Activated T-helper 2 cell treated with anti-CD3 and anti-CD28 coated beads, Interferon-gamma antibody, Interleukin-2, Interleukin-4, amounts not matched to agents 10 μg/mL and 5 μg/mL and 100 μg/mL, durations not matched to agents 14 hours and 24 hours and 36 hours (primary cell): ENCODE measurements at regions of chrX and their contacts with region 1.

Region 1: DNA sequence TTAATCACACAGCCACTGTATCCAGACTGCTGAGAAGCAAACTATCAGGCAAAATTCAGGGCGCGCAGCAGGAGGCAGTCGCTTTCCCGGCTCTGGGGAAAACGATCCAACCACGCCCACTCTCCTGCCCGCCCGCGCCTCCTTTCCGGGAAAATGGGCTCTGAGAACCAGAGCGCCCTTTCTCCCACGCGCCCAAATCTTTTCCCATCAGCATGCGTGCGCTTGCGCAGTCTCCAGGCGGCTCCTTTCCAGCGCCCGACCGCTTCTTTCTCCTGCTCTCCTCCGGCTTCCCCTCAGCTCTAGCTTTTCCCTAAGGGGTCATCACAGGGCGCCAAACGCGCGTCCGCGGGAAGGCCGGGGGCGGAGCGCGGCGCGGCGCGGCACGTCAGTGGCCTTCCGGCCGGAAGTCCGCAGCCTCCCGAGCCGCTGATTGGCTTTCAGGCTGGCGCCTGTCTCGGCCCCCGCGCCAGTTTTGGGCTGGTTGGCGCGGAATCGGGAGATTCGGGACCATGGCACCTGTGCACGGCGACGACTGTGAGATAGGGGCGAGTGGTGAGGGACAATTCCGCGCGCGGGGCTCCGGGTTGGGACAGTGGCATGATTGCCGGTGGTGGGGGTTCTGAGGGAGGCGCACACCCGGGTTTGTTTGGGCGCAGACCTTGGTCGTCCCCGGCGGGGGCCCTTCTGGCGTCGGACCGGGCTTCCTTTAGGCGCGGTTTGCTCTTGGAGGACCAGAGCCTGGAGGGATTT is at the start of gene POLA1:
- DNase-seq: peak; percentile 72
- H3K4me3 Mint-ChIP-seq: peak within 1 kb of the TSS; percentile 89
- H3K27ac Mint-ChIP-seq: peak within 1 kb of the TSS; percentile 90
- H3K4me1 Mint-ChIP-seq: peaks cover 11% of the 10 kb centered on the region
- H3K27me3 Mint-ChIP-seq: peaks cover 1% of the 10 kb centered on the region
- total RNA-seq, gene POLA1: 36.3 and 36.7 TPM in 2 replicates

Region 2: DNA sequence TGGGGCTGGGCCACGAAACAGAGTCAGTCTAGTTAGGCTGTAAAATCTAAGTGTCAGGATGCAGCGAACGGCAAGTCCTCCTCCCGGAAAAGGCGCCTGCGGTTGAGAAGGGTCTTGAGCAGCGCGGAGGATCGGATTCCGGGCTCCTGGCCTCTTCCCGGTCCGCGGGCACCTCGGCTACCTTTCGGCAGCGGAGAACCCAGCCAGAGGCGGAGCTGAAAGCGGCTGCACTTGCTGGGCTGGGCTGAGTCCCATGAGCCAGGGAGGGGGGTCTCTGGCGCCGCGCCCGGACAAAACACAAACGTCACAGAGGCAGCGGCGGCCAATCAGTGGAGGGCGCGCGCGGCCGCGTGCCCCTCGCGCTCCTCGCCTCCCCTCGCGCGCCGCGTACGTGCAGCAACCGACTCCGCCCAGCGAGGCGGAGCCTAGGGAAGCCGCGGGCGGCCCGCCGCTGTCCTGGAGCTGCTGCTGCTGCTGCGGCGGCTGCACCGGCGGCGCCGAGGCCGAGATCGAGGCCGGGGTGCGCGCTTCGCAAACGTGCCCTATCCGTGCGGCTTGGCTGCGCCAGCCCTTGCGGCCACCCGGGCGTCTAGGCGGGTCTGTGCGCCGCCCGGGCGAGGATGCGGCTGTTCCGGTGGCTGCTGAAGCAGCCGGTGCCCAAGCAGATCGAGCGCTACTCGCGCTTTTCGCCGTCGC is 228.6 kb before region 1 on chrX and contains the start of gene PDK3:
- intact Hi-C with region 1: loop called (anchors 5 kb)
- DNase-seq: peak; percentile 81
- H3K4me3 Mint-ChIP-seq: peak within 1 kb of the TSS; percentile 84
- H3K27ac Mint-ChIP-seq: peak within 1 kb of the TSS; percentile 85
- H3K4me1 Mint-ChIP-seq: peaks cover 27% of the 10 kb centered on the region
- H3K27me3 Mint-ChIP-seq: no peaks in the 10 kb centered on the region
- total RNA-seq, gene PDK3: 24.6 and 26.4 TPM in 2 replicates

Region 3: GRCh38 chrX:24513416-24513815 is 180.2 kb before region 1 on chrX:
- intact Hi-C with region 1: loop called (anchors 5 kb)
- DNase-seq: peak; percentile 12
- H3K4me3 Mint-ChIP-seq: no peak overlapping the region
- H3K27ac Mint-ChIP-seq: peak overlapping the region; percentile 44
- H3K4me1 Mint-ChIP-seq: peaks cover 17% of the 10 kb centered on the region
- H3K27me3 Mint-ChIP-seq: no peaks in the 10 kb centered on the region

Region 4: GRCh38 chrX:24607616-24608015 is 86.0 kb before region 1 on chrX:
- intact Hi-C with region 1: no loop called
- DNase-seq: no peak
- H3K4me3 Mint-ChIP-seq: no peak overlapping the region
- H3K27ac Mint-ChIP-seq: no peak overlapping the region
- H3K4me1 Mint-ChIP-seq: no peaks in the 10 kb centered on the region
- H3K27me3 Mint-ChIP-seq: peaks cover 13% of the 10 kb centered on the region

Region 5: GRCh38 chrX:24647257-24648058 is 46.2 kb before region 1 on chrX and contains the start of gene PCYT1B:
- intact Hi-C with region 1: loop called (anchors 1 kb)
- DNase-seq: peak; percentile 58
- H3K4me3 Mint-ChIP-seq: peak within 1 kb of the TSS; percentile 57
- H3K27ac Mint-ChIP-seq: no peak within 1 kb of the TSS
- H3K4me1 Mint-ChIP-seq: peaks cover 10% of the 10 kb centered on the region
- H3K27me3 Mint-ChIP-seq: peaks cover 30% of the 10 kb centered on the region
- total RNA-seq, gene PCYT1B: 0.09 and 0.21 TPM in 2 replicates

Region 6: DNA sequence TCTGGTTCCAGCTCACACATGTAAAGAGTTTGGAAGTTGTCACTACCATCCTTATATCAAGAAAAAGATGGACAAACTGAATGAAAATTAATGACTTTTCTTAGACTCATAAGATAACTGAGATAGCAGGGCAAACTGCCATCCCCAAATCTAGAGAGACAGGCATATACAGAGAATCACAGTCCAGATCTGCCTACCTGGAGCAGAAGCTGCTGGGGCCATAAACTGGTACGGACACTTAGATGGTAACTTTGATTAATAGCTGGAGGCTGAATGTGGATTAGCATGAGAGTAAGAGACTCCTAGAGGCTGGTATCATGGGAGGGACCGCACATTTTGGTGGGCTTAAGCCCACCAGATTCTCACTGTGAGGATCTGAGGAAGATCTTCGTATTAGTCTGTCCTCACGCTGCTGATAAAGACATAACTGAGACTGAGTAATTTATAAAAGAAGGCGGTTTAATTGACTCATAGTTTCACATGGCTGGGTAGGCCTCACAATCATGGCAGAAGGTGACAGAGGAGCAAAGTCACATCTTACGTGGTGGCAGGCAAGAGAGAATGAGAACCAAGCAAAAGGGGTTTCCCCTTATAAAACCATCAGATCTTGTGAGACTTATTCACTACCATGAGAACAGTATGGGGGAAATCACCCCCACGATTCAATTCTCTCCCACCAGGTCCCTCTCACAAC is 10.7 kb before region 1 on chrX:
- intact Hi-C with region 1: loop called (anchors 1 kb)
- DNase-seq: no peak
- H3K4me3 Mint-ChIP-seq: no peak overlapping the region
- H3K27ac Mint-ChIP-seq: peak overlapping the region; percentile 28
- H3K4me1 Mint-ChIP-seq: peaks cover 12% of the 10 kb centered on the region
- H3K27me3 Mint-ChIP-seq: peaks cover 10% of the 10 kb centered on the region

Region 7: DNA sequence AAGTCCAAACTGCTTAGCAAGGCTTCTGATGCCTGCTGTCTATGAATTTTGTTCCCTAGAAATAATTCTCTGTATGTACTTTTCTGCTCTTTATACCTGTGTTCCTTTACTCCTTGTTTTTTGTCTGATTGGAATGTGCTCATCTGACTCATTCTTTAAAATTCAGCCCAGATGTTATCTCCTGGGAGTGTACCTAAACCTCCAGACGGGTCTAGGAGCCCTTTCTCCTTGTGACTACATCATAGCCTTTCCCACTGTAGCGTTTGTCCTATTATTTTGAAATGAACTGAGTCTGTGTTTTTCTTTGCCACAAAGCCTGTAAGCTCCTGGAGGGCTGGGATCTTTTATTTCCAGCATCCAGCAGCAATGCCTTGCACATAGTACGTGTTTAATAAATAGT is 26.4 kb after region 1 on chrX:
- intact Hi-C with region 1: no loop called
- DNase-seq: no peak
- H3K4me3 Mint-ChIP-seq: no peak overlapping the region
- H3K27ac Mint-ChIP-seq: no peak overlapping the region
- H3K4me1 Mint-ChIP-seq: no peaks in the 10 kb centered on the region
- H3K27me3 Mint-ChIP-seq: no peaks in the 10 kb centered on the region